Heart right ventricle (tissue), 16 donors: ENCODE measurements at regions of chr5 and their contacts with region 1.

Region 1: DNA sequence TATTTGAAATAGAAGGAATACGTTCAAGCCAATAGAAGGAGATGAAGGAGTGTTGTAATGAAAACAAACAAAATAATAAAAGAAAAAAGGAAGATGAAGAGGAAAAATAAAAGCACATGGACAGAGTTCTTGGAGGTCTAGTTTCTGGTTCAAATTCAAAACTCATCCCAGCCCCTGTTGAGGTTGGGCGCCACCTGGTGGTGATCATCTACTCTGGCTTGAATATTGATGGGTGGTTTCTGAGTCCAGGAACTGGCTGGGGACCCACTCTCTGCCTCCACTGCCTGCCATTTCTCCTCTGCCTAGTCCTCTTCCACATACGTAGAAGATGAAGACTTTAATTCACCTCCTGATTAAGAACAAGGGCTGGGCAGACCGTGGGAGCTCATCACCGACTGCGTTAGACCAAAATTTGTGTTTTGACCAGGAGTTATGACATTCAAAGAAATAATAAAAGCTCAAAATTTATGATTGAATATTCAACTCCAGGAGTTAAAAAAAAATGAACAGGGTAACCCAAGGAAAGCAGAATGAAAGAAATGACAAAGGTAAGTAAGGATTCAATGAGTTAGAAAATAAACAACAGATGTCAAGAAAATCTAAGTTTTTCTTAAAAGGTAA is 99.0 kb upstream of the SLC1A3 start:
- DNase-seq: peak; percentile 72 to 73
- ATAC-seq: peak in 5 of 8 donors; percentile 55 to 70 (median 65)
- H3K4me3 ChIP-seq: no peak overlapping the region
- H3K27ac ChIP-seq: no peak overlapping the region
- H3K4me1 ChIP-seq: no peaks in the 10 kb centered on the region
- H3K27me3 ChIP-seq: no peaks in the 10 kb centered on the region
- CTCF ChIP-seq: peak; percentile 57 to 91 (median 80)

Region 2: DNA sequence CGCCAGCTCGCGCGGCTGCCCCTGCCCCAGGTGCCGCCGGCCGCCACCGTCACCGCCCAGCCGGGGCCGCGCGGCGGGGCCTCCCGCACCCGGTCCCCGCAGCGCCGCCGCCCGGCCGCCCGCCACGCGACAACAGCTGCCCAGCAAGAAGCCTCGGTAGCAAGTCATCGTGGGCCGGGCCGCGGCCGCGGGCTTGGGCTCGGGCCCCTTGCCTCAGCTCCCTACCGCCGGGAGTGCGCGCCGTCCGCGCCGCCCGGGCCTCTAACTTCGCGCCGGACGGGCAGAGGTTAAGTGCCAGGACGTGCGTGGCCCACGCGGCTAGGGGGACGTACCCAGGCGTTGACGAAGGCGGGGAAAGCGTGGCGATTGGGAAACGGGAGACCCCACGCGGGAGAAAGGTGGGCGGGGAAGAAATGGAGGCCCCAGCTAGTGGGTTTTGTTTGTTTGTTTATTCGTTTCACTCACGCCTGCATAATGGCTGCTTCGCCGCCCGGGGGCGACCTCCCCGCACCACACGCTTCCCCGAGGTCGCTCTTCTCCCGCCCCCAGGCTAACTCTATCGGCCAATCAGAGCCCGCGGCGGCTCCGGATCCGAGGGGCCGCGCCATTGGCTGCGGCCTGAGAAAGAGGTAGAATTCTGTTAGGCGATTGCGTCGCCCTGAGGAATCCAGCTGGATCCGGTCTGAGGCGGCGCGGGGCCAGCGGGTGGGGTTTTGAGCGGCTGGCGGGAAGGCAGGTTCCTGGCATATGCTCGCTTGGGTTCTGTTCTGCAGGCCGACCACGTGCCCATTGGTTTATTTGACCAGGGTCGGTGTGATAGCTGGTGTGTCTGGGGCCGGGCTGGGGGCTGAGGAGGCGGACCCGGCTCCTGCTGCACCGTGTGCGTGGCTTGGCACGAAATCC is 265.6 kb before region 1 on chr5 and contains the start of gene NADK2:
- intact Hi-C with region 1: loop called in 1 of 10 experiments (anchors 10 kb)
- DNase-seq: peak; percentile 95 to 97
- ATAC-seq: peak; percentile 92 to 97 (median 95)
- H3K4me3 ChIP-seq: peak within 1 kb of the TSS; percentile 63 to 96 (median 90)
- H3K27ac ChIP-seq: peak within 1 kb of the TSS; percentile 87 to 98 (median 97)
- H3K4me1 ChIP-seq: peaks cover 0 to 48% (median 36%) of the 10 kb centered on the region in 9 donors
- H3K27me3 ChIP-seq: no peaks in the 10 kb centered on the region
- CTCF ChIP-seq: peak; percentile 45 to 89 (median 75)
- total RNA-seq, gene NADK2: 35.7 to 53.5 (median 38.9) TPM

Region 3: GRCh38 chr5:36422952-36423351 is 84.5 kb before region 1 on chr5:
- intact Hi-C with region 1: loop called in 6 of 10 experiments (anchors 5 to 10 kb)
- DNase-seq: no peak
- ATAC-seq: no peak
- H3K4me3 ChIP-seq: no peak overlapping the region
- H3K27ac ChIP-seq: no peak overlapping the region
- H3K4me1 ChIP-seq: no peaks in the 10 kb centered on the region
- H3K27me3 ChIP-seq: no peaks in the 10 kb centered on the region
- CTCF ChIP-seq: no peak

Region 4: DNA sequence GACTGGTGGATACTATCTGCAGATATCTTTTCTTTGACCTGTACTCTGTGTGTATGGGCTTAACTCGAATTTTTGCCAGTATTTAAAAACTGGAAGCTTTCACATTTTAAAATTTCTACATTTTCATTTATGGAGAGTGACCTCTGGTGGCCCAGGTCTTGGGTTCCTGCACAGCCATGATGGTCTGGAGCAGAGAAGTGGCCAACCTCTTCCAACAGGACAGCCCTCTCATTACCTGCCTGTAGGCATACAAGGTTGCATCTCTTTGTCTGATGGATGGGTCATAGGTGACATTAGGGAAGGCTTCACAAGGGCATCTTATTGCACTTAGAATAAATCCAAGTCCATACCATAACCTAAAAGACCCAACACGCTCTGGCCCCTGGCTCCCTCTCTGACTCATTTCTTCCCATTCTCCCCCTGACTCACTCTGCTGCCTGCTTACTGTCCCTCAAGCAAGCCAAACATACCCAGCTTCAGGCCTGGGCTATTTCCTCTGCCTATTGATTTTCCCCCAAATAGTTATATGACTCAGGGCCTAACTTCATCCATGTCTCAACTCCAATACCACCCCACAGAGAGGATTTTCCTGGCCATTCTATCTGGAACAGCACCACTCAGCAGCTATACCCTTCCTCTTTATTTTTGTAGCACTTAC is 14.3 kb before region 1 on chr5:
- intact Hi-C with region 1: no loop called
- DNase-seq: no peak
- ATAC-seq: no peak
- H3K4me3 ChIP-seq: no peak overlapping the region
- H3K27ac ChIP-seq: no peak overlapping the region
- H3K4me1 ChIP-seq: peaks cover 0 to 3% (median 0%) of the 10 kb centered on the region in 9 donors
- H3K27me3 ChIP-seq: peaks cover 0 to 3% (median 0%) of the 10 kb centered on the region in 7 donors
- CTCF ChIP-seq: no peak

Region 5: DNA sequence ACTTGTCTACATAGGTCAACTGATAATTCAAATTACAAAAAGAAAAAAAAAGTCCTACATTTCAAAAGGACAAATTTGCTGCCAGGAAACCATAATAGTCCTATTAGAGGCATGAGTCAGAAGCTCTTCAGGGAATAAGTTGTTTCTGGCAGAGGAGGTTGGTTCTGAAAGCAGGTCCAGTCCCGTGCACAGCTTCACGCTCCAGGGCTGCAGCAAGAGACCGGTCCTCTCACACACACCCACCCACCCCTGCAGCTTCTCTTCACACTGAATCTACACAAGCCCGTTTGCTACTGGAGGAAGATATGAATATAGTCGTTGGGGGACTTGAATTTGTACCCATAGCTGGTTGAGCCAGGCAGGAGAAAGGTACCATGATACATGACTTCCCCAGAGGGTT is 62.0 kb after region 1 on chr5:
- intact Hi-C with region 1: no loop called
- DNase-seq: peak; percentile 30 to 50
- ATAC-seq: peak; percentile 83 to 95 (median 89)
- H3K4me3 ChIP-seq: no peak overlapping the region
- H3K27ac ChIP-seq: peak overlapping the region; percentile 17 to 73 (median 60)
- H3K4me1 ChIP-seq: peaks cover 3 to 26% (median 19%) of the 10 kb centered on the region in 9 donors
- H3K27me3 ChIP-seq: no peaks in the 10 kb centered on the region
- CTCF ChIP-seq: no peak